ENCODE measurements at regions of chr4 and their contacts with region 1.

Region 1: DNA sequence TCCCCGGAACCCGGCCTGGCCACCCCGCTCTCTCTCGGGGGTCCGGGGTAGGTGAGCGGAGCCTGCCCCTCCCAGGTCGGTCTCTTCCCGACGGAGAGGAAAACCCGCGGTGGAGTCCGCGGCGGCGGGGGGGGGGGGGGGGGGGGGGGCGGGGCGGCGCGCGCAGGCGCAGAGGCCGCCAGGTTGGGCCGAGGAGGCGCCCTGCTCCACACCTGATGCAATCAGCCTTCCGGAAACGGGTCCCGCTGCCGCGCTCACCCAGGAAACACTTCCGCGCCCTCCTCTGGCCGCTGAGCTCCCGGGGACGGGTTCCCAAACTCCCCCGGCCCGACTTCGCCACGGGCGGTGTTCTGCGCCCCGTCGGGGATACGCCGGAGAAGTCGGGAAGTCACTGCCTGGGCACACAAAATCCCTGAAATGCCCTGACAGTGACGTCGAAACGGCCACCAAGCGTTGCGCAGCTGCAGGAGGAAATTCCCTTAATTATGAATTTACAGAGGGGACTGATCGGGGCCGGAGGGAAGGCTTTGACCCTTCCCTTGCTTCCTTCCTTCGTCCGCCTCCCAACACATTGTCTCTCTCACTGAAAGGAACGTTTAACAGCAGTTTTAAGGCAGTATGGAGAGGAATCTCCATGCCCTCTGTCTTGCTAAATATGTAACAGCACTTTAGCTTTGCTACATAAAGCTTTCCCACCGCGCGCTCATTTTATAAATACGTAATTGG is 2.1 kb upstream of the APBB2 start:
- DNase-seq: peak; percentile 10 to 39 (median 21)
- H3K4me3 ChIP-seq: peak overlapping the region in 1 of 2 donors; percentile 40
- H3K4me3 Mint-ChIP-seq: peak overlapping the region; percentile 40 to 83 (median 74)
- H3K27ac ChIP-seq: no peak overlapping the region
- H3K27ac Mint-ChIP-seq: peak overlapping the region in 2 of 7 donors; percentile 11 to 19
- H3K4me1 ChIP-seq: peaks cover 20% of the 10 kb centered on the region
- H3K4me1 Mint-ChIP-seq: peaks cover 13 to 23% (median 23%) of the 10 kb centered on the region in 4 donors
- H3K27me3 ChIP-seq: peaks cover 10% of the 10 kb centered on the region
- H3K27me3 Mint-ChIP-seq: peaks cover 34 to 45% of the 10 kb centered on the region in 2 donors

Region 2: GRCh38 chr4:40976343-40976742 is 240.1 kb before region 1 on chr4:
- CTCF ChIA-PET with region 1: interaction called, 4 read pairs
- POLR2A ChIA-PET with region 1: interaction called, 3 read pairs
- intact Hi-C with region 1: loop called (anchors 2 kb)
- DNase-seq: peak in 1 of 5 donors; percentile 1
- H3K4me3 ChIP-seq: no peak overlapping the region
- H3K4me3 Mint-ChIP-seq: no peak overlapping the region
- H3K27ac ChIP-seq: no peak overlapping the region
- H3K27ac Mint-ChIP-seq: no peak overlapping the region
- H3K4me1 ChIP-seq: no peaks in the 10 kb centered on the region
- H3K4me1 Mint-ChIP-seq: no peaks in the 10 kb centered on the region
- H3K27me3 ChIP-seq: no peaks in the 10 kb centered on the region
- H3K27me3 Mint-ChIP-seq: peaks cover 5 to 13% of the 10 kb centered on the region in 2 donors

Measured in CD4-positive, alpha-beta memory T cell (primary cell).